K562 (cell line): ENCODE measurements at regions of chr6 and their contacts with region 1.

Region 1: GRCh38 chr6:119742188-119742803 is 392.7 kb upstream of the MAN1A1 start:
- DNase-seq: peak; percentile 54 to 80 (median 60)
- ATAC-seq: peak; percentile 98
- H3K4me3 ChIP-seq: no peak overlapping the region
- H3K27ac ChIP-seq: no peak overlapping the region
- H3K4me1 ChIP-seq: no peaks in the 10 kb centered on the region
- H3K27me3 ChIP-seq: no peaks in the 10 kb centered on the region; a peak in 1 of 5 replicates
- CTCF ChIP-seq: peak; percentile 76 to 87 (median 82)
- EP300 ChIP-seq: no peak
- POLR2A ChIP-seq: no peak
- RAD21 ChIP-seq: peak; percentile 72 to 85

Region 2: DNA sequence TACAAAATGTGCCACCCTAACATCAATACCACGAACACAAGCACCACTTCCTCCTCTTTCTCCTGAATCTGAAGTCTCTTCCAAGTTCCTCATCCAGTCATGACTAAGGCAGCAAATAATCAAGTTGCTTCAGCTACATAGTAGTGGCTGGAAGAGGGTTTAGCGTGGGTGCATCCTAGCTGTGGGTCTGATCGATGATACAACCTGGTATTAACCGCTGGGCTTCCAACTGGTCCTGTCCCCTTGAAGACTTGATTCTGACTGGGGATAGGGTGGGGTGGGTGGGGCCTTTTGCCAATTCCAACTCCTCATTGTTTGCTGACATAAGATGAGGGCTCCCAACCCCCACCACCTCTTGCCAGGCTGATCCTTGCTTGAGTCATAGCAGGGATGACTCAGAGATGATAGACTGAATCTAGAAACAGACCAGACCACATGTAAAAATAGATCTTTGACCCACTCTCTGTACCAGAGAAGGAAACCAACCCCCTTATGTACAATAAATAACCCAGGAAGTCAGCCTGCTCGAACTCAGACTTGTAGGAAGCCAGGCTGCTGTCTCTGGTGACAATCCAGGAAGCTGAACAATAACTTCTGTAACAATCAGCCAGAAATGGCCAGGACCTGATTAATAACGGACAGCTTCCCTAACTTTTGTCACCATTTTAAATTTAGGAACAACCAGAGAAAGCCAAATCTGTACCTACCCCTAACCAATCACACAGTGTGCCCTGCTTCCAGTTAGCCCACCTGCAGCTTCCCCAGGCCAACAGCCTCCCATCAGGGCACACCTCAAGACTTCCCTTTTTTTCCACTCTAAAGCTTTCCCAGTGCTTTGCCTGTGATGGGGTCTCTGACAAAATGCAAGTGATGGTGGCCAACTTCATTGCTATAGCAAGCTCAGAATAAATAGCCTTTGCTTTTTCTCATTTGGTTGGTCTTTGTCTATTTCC is 594.9 kb before region 1 on chr6:
- CTCF ChIA-PET with region 1: interaction called, 5 read pairs
- POLR2A ChIA-PET with region 1: no interaction called
- in situ Hi-C with region 1: no loop called
- intact Hi-C with region 1: loop called (anchors 5 kb)
- DNase-seq: peak; percentile 89 to 92 (median 91)
- ATAC-seq: peak; percentile 83
- H3K4me3 ChIP-seq: no peak overlapping the region
- H3K27ac ChIP-seq: peak overlapping the region; percentile 85
- H3K4me1 ChIP-seq: peaks cover 23 to 39% of the 10 kb centered on the region in 2 experiments
- H3K27me3 ChIP-seq: no peaks in the 10 kb centered on the region
- CTCF ChIP-seq: no peak
- EP300 ChIP-seq: peak; percentile 87
- POLR2A ChIP-seq: no peak
- RAD21 ChIP-seq: peak in 1 of 2 experiments; percentile 15; a peak in 1 of 4 replicates

Region 3: GRCh38 chr6:119720160-119720559 is 22.1 kb before region 1 on chr6:
- CTCF ChIA-PET with region 1: no interaction called
- POLR2A ChIA-PET with region 1: no interaction called
- in situ Hi-C with region 1: no loop called
- intact Hi-C with region 1: no loop called
- DNase-seq: peak; percentile 13 to 55 (median 22)
- ATAC-seq: peak; percentile 96
- H3K4me3 ChIP-seq: no peak overlapping the region
- H3K27ac ChIP-seq: no peak overlapping the region
- H3K4me1 ChIP-seq: no peaks in the 10 kb centered on the region
- H3K27me3 ChIP-seq: no peaks in the 10 kb centered on the region
- CTCF ChIP-seq: peak; percentile 35 to 75 (median 52); a peak in 5 of 6 replicates
- EP300 ChIP-seq: no peak
- POLR2A ChIP-seq: no peak
- RAD21 ChIP-seq: peak; percentile 24 to 50; a peak in 3 of 4 replicates

Region 4: DNA sequence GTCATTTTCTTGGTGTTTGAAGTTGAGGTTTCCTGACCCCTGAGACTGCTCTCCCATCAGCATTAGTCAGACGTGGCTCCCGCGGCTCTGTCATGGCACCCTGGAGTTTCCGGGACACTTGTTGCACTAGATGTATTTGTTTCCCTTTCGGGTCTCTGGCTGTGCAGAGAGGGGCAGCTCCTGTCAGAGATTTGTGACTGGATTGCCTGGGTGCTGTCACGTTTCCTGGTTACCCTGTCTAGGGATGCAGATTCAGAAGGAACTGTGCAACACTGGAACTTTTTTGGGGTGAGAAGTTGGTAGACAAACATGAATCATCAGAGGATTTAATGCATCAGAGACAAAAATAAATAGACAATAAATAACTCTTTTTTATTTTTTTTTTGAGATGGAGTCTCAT is 39.1 kb after region 1 on chr6:
- CTCF ChIA-PET with region 1: no interaction called
- POLR2A ChIA-PET with region 1: no interaction called
- in situ Hi-C with region 1: no loop called
- intact Hi-C with region 1: no loop called
- DNase-seq: no peak
- ATAC-seq: no peak
- H3K4me3 ChIP-seq: no peak overlapping the region
- H3K27ac ChIP-seq: no peak overlapping the region
- H3K4me1 ChIP-seq: no peaks in the 10 kb centered on the region
- H3K27me3 ChIP-seq: no peaks in the 10 kb centered on the region
- CTCF ChIP-seq: no peak
- EP300 ChIP-seq: no peak
- POLR2A ChIP-seq: no peak
- RAD21 ChIP-seq: no peak

Region 5: DNA sequence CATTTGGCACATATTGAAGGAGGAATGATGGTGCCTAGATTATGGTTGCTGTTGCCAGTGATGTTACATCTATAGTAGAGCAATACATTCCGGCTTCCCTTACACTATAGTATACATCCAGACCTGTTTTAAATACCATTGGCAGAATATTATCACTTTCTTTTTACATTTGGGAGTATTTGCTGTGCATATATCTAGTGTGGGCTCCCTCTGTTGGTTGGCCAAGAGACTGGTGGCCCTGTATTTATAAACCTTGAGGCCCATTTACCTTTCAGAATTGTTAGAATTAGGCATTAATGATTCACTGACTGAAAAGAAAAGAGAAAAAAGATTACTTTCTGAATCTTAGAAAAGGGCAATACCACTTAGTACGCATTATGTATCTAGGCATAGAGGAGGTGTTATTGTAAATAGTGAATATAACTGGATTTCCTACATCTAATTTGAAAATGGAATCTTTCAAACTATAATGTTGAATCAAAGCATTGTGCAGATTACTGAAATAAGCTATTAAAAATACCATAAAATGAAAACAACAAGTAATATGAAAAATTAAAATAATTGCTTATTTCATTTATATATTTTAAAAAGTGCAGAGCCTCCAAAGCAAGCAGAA is 236.1 kb after region 1 on chr6:
- CTCF ChIA-PET with region 1: interaction called, 4 read pairs
- POLR2A ChIA-PET with region 1: no interaction called
- in situ Hi-C with region 1: no loop called
- intact Hi-C with region 1: loop called (anchors 2 kb)
- DNase-seq: peak in 1 of 4 experiments; percentile 14
- ATAC-seq: peak; percentile 55; the same call in 1 of the 3 replicates
- H3K4me3 ChIP-seq: no peak overlapping the region
- H3K27ac ChIP-seq: no peak overlapping the region
- H3K4me1 ChIP-seq: no peaks in the 10 kb centered on the region
- H3K27me3 ChIP-seq: no peaks in the 10 kb centered on the region
- CTCF ChIP-seq: peak; percentile 2 to 44 (median 25); a peak in 3 of 6 replicates
- EP300 ChIP-seq: no peak
- POLR2A ChIP-seq: no peak
- RAD21 ChIP-seq: peak; percentile 21 to 43; a peak in 3 of 4 replicates

Region 6: GRCh38 chr6:120826253-120826652 is 1084.0 kb after region 1 on chr6:
- CTCF ChIA-PET with region 1: no interaction called
- POLR2A ChIA-PET with region 1: no interaction called
- in situ Hi-C with region 1: no loop called
- intact Hi-C with region 1: loop called (anchors 5 kb)
- DNase-seq: peak in 2 of 4 experiments; percentile 9 to 27
- ATAC-seq: 0 out of 3 replicates have a peak, but pooled peaks have one; percentile 57
- H3K4me3 ChIP-seq: no peak overlapping the region
- H3K27ac ChIP-seq: no peak overlapping the region
- H3K4me1 ChIP-seq: no peaks in the 10 kb centered on the region
- H3K27me3 ChIP-seq: no peaks in the 10 kb centered on the region
- CTCF ChIP-seq: peak in 2 of 3 experiments; percentile 43 to 45; a peak in 2 of 6 replicates
- EP300 ChIP-seq: no peak
- POLR2A ChIP-seq: no peak
- RAD21 ChIP-seq: peak in 1 of 2 experiments; percentile 51; a peak in 2 of 4 replicates

Region 7: GRCh38 chr6:121305957-121306607 is 1563.8 kb after region 1 on chr6:
- CTCF ChIA-PET with region 1: no interaction called
- POLR2A ChIA-PET with region 1: no interaction called
- in situ Hi-C with region 1: no loop called
- intact Hi-C with region 1: loop called (anchors 2 kb)
- DNase-seq: peak; percentile 16 to 52 (median 23)
- ATAC-seq: peak; percentile 86
- H3K4me3 ChIP-seq: no peak overlapping the region
- H3K27ac ChIP-seq: no peak overlapping the region
- H3K4me1 ChIP-seq: no peaks in the 10 kb centered on the region
- H3K27me3 ChIP-seq: no peaks in the 10 kb centered on the region
- CTCF ChIP-seq: peak; percentile 26 to 64 (median 33); a peak in 3 of 6 replicates
- EP300 ChIP-seq: no peak
- POLR2A ChIP-seq: no peak
- RAD21 ChIP-seq: peak; percentile 71 to 86